Ascending aorta (tissue), 2 donors: ENCODE measurements at regions of chr3 and their contacts with region 1.

Region 1: GRCh38 chr3:81760924-81761903 is at the start of gene GBE1:
- DNase-seq: peak; percentile 89 to 98
- H3K4me3 ChIP-seq: peak within 1 kb of the TSS; percentile 74 to 81
- H3K27ac ChIP-seq: peak within 1 kb of the TSS; percentile 99
- H3K4me1 ChIP-seq: peaks cover 3 to 30% of the 10 kb centered on the region in 2 donors
- H3K27me3 ChIP-seq: no peaks in the 10 kb centered on the region
- CTCF ChIP-seq: peak in 2 of 3 experiments; percentile 49 to 51
- total RNA-seq, gene GBE1: 20.8 TPM

Region 2: DNA sequence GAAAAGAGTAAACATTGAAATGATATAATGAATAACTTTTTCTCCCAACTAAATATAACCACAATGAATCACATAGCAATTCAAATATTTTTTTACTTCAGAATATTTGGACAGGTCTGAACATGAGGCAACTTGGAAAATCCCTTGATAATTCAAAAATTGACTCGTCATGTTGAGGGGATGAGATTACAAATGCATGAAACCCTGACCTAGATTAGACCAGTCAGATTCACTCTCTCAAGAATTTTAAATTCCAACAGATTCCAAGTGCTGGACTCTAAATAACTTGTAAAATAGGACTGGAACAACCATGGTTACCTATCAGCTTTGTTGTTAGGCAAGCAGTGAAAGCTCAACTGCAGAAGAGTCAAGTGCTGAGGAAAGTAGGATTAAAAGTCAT is 317.3 kb before region 1 on chr3:
- intact Hi-C with region 1: loop called (anchors 5 kb)
- DNase-seq: no peak
- H3K4me3 ChIP-seq: no peak overlapping the region
- H3K27ac ChIP-seq: peak overlapping the region; percentile 24 to 77
- H3K4me1 ChIP-seq: peaks cover 3 to 13% of the 10 kb centered on the region in 2 donors
- H3K27me3 ChIP-seq: no peaks in the 10 kb centered on the region
- CTCF ChIP-seq: no peak

Region 3: GRCh38 chr3:81490541-81491288 is 270.5 kb before region 1 on chr3:
- intact Hi-C with region 1: loop called (anchors 5 kb)
- DNase-seq: peak; percentile 14 to 90
- H3K4me3 ChIP-seq: no peak overlapping the region
- H3K27ac ChIP-seq: peak overlapping the region; percentile 69 to 72
- H3K4me1 ChIP-seq: peaks cover 0 to 8% of the 10 kb centered on the region in 2 donors
- H3K27me3 ChIP-seq: no peaks in the 10 kb centered on the region
- CTCF ChIP-seq: peak; percentile 53 to 65 (median 55)

Region 4: DNA sequence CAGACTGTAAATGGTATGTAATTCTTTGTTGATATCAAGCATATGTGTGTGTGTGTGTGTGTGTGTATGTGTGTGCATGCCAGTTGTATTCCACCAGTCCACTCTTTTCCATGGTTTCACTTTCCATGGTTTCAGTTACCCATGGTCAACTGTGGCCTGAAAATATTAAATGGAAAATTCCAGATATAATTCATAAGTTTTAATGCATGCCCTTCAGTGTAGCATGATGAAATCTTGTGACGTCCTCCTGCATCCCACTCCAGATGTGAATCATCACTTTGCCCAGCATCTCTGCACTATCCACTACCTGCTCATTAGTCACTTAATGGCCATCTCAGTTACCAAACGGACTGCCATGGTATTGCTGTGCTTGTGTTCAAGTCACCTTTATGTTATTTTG is 215.6 kb before region 1 on chr3:
- intact Hi-C with region 1: no loop called
- DNase-seq: no peak
- H3K4me3 ChIP-seq: no peak overlapping the region
- H3K27ac ChIP-seq: no peak overlapping the region
- H3K4me1 ChIP-seq: peaks cover 0 to 9% of the 10 kb centered on the region in 2 donors
- H3K27me3 ChIP-seq: no peaks in the 10 kb centered on the region
- CTCF ChIP-seq: no peak

Region 5: GRCh38 chr3:81716870-81717509 is 44.2 kb before region 1 on chr3:
- intact Hi-C with region 1: loop called (anchors 2 kb)
- DNase-seq: no peak
- H3K4me3 ChIP-seq: no peak overlapping the region
- H3K27ac ChIP-seq: peak overlapping the region in 1 of 2 donors; percentile 38
- H3K4me1 ChIP-seq: peaks cover 0 to 7% of the 10 kb centered on the region in 2 donors
- H3K27me3 ChIP-seq: no peaks in the 10 kb centered on the region
- CTCF ChIP-seq: no peak

Region 6: GRCh38 chr3:81743096-81744025 is 17.9 kb before region 1 on chr3:
- intact Hi-C with region 1: loop called (anchors 1 kb)
- DNase-seq: peak in 1 of 2 donors; percentile 78
- H3K4me3 ChIP-seq: peak overlapping the region in 1 of 2 donors; percentile 1
- H3K27ac ChIP-seq: peak overlapping the region; percentile 81 to 92
- H3K4me1 ChIP-seq: peaks cover 2 to 44% of the 10 kb centered on the region in 2 donors
- H3K27me3 ChIP-seq: no peaks in the 10 kb centered on the region
- CTCF ChIP-seq: no peak

Region 7: DNA sequence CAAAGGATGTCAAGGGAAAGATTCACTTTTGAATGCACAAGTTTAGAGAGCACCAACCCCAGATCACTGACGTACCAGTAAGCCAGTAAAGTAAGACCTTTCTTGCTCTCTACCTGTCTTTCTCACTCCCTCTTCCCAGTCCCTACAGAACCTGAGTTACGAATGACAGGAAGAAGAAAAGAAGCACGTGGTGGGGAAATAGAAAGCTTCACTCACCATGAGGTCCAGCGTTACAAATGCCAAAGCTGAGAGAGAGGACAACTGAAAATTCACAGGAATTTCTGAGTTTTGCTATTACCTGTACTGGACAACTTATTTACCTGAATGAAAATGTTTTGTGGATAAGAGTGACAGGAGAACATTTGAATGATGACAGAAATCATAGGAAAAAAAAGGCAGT is 133.4 kb after region 1 on chr3:
- intact Hi-C with region 1: no loop called
- DNase-seq: no peak
- H3K4me3 ChIP-seq: no peak overlapping the region
- H3K27ac ChIP-seq: no peak overlapping the region
- H3K4me1 ChIP-seq: no peaks in the 10 kb centered on the region
- H3K27me3 ChIP-seq: no peaks in the 10 kb centered on the region
- CTCF ChIP-seq: no peak

Region 8: GRCh38 chr3:82921671-82922070 is 1160.5 kb after region 1 on chr3:
- intact Hi-C with region 1: no loop called
- DNase-seq: no peak
- H3K4me3 ChIP-seq: no peak overlapping the region
- H3K27ac ChIP-seq: no peak overlapping the region
- H3K4me1 ChIP-seq: no peaks in the 10 kb centered on the region
- H3K27me3 ChIP-seq: no peaks in the 10 kb centered on the region
- CTCF ChIP-seq: no peak

Region 9: DNA sequence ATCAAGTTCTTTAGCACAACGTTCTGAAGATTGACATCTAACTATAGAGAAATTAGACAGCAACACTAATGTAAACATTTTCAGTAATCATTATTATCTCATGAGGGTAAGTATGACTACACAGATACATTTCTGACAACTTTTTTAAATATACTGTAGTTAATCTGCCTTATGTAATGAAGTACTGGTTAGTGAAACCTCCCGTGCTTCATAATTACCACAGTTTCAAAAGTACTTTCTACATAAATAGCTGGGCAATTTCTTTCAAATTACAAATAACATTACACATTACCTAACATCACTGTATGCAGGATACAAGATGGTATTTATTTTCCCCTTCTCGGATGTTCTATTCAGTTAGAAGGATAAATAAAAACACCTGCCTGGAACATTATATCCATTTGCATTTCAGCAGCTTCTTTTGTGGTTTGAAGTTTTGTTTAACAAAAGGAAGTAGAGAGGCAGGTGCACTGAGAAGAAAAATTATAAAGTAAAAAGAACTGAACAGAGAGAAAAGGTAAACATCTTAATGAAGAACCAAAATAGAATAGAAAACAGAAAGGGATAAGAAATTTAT is 1241.7 kb after region 1 on chr3:
- intact Hi-C with region 1: no loop called
- DNase-seq: no peak
- H3K4me3 ChIP-seq: no peak overlapping the region
- H3K27ac ChIP-seq: no peak overlapping the region
- H3K4me1 ChIP-seq: no peaks in the 10 kb centered on the region
- H3K27me3 ChIP-seq: no peaks in the 10 kb centered on the region
- CTCF ChIP-seq: no peak